Endothelial cell of umbilical vein (primary cell): ENCODE measurements at regions of chr16 and their contacts with region 1.

Region 1: DNA sequence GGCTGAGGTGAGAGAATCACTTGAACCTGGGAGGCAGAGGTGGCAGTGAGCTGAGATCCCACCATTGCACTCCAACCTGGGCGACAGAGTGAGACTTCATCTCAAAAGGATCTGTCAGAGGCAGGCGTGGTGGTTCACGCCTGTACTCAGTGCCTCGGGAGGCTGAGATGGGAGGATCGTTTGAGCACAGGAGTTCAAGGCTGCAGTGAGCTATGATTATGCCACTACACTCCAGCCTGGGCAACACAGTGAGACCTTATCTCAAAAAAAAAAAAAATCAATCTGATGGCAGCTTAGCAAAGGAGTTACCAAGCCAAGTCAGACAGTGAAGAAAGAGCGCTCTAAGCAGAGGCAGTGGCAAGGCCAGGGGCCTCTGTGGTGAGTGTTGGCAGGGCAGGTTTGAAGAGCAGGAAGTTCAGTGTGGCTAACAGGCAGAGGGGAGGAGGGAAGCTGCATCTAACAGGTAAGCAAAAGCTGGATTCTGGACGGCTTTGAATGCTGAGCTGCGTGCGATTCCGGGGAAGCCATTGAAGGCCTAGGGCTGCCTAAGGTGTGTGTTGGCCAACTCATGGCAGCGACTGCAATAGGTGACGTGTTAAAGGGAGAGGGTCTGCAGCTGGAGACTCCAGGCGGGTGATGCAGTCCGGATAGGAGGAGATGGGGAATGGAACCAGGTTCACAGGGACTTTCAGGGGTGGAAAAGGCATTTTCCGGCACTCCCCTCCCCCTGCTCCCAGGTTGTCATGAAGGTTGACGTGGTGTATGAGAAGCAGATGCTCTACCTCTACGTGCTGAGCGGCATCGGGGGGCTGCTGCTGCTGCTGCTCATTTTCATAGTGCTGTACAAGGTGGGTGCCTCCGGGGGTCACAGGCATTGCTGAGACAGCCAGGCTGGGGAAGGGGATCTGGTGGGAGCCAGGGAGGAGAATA is 7.0 kb downstream of the ZNF768 start:
- DNase-seq: no peak
- H3K4me3 ChIP-seq: no peak overlapping the region
- H3K27ac ChIP-seq: no peak overlapping the region
- H3K4me1 ChIP-seq: no peaks in the 10 kb centered on the region
- H3K27me3 ChIP-seq: no peaks in the 10 kb centered on the region
- CTCF ChIP-seq: no peak
- POLR2A ChIP-seq: no peak

Region 2: DNA sequence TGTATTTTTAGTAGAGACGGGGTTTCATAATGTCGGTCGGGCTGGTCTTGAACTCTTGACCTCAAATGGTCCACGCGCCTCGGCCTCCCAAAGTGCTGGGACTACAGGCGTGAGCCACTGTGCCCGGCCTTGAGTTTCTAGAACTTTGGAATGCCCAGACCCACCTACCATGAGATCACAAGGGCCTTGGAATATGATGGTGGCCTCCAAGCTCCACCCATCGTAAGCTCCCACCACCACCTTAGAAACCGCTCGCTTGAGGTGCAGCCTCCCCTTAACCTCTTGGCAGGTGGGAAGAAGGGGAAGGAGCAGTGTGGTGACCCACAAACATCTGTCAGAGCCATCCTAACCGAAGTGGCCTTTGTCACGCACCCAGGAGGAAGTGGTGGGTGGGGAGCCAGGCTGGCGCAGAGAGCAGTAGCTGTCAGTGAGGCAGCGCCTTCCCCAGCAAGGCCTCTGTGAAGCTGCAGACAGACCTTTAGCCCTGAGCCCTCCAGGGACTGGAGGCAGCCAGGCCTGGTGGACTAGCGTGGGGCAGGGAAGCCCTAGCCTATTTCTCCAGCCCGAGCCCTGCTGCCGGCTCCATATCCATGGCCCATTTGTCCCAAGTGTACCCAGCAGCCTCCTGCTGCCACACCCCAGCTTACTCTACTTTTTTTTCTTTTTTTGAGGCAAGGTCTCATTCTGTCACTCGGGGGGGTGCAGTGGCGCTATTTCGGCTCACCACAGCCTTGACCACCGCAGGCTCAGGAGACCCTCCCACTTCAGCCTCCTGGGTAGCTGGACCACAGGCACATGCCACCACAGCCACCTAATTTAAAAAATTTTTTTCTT is 60.6 kb before region 1 on chr16:
- CTCF ChIA-PET with region 1: no interaction called
- POLR2A ChIA-PET with region 1: interaction called, 3 read pairs
- dilution Hi-C with region 1: no loop called
- intact Hi-C with region 1: loop called (anchors 5 kb)
- DNase-seq: no peak
- H3K4me3 ChIP-seq: no peak overlapping the region
- H3K27ac ChIP-seq: no peak overlapping the region
- H3K4me1 ChIP-seq: no peaks in the 10 kb centered on the region
- H3K27me3 ChIP-seq: peaks cover 0 to 5% of the 10 kb centered on the region in 2 experiments
- CTCF ChIP-seq: no peak
- POLR2A ChIP-seq: no peak